B cell (primary cell): ENCODE measurements at regions of chr3 and their contacts with region 1.

Region 1: GRCh38 chr3:152268555-152269425 is at the start of gene MBNL1:
- DNase-seq: peak; percentile 93
- ATAC-seq: peak; percentile 70
- H3K4me3 ChIP-seq: peak within 1 kb of the TSS; percentile 91 to 100 (median 93)
- H3K4me3 Mint-ChIP-seq: peak within 1 kb of the TSS; percentile 87
- H3K27ac ChIP-seq: peak within 1 kb of the TSS; percentile 86 to 93
- H3K27ac Mint-ChIP-seq: peak within 1 kb of the TSS; percentile 96
- H3K4me1 ChIP-seq: peaks cover 29 to 49% of the 10 kb centered on the region in 2 donors
- H3K4me1 Mint-ChIP-seq: peaks cover 63% of the 10 kb centered on the region
- H3K27me3 ChIP-seq: no peaks in the 10 kb centered on the region
- H3K27me3 Mint-ChIP-seq: no peaks in the 10 kb centered on the region
- CTCF ChIP-seq: no peak
- total RNA-seq, gene MBNL1: 505 and 514 TPM in 2 replicates

Region 2: GRCh38 chr3:152199102-152199840 is 69.5 kb before region 1 on chr3:
- CTCF ChIA-PET with region 1: interaction called, 29 read pairs
- POLR2A ChIA-PET with region 1: interaction called, 52 read pairs
- intact Hi-C with region 1: loop called (anchors 1 kb)
- DNase-seq: peak; percentile 60
- ATAC-seq: peak; percentile 19
- H3K4me3 ChIP-seq: peak overlapping the region; percentile 16 to 69 (median 35)
- H3K4me3 Mint-ChIP-seq: peak overlapping the region; percentile 85
- H3K27ac ChIP-seq: peak overlapping the region; percentile 78 to 92
- H3K27ac Mint-ChIP-seq: peak overlapping the region; percentile 94
- H3K4me1 ChIP-seq: peaks cover 54 to 72% of the 10 kb centered on the region in 2 donors
- H3K4me1 Mint-ChIP-seq: peaks cover 71% of the 10 kb centered on the region
- H3K27me3 ChIP-seq: no peaks in the 10 kb centered on the region
- H3K27me3 Mint-ChIP-seq: no peaks in the 10 kb centered on the region
- CTCF ChIP-seq: no peak

Region 3: DNA sequence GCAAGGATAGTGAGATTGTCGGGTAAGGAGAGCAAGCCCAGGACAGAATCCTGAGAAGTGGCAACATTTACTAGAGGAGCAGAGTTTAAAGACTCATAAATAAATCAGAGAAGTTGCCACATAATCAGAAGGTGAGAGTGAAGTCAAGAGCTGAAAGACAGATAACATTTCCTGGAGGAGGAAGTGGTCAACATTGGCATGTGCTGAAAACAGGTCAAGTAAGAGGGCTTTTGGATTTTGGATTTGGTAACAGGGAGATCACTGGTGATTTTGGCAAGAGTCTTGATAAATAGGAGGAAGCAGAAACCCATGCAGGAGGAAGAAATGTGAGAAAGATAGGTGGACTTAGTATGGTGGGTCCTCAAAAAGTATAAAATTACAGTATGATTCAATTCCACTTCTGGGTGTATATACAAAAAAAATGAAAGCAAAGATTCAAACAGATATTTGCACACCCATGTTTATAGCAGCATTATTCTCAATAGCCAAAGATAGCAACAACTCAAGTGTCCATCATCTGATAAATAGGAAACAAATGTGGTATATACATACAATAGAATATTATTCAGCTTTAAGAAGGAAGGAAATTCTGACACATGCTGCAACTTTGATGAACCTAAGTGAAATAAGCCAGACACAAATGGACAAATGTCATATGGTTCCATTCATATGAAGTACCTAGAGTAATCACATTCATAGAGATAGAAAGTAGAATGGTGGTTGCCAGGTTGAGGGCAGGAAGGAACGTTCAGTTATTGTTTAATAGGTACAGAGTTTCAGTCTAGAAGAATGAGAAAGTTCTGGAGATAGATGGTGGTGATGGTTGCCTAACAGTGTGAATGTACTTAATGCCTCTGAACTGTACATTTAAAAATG is 27.4 kb before region 1 on chr3:
- CTCF ChIA-PET with region 1: interaction called, 17 read pairs
- POLR2A ChIA-PET with region 1: interaction called, 29 read pairs
- intact Hi-C with region 1: loop called (anchors 1 kb)
- DNase-seq: peak; percentile 38
- ATAC-seq: no peak
- H3K4me3 ChIP-seq: peak overlapping the region in 1 of 5 experiments; percentile 30
- H3K4me3 Mint-ChIP-seq: peak overlapping the region; percentile 68
- H3K27ac ChIP-seq: peak overlapping the region; percentile 57 to 87
- H3K27ac Mint-ChIP-seq: peak overlapping the region; percentile 84
- H3K4me1 ChIP-seq: peaks cover 38 to 53% of the 10 kb centered on the region in 2 donors
- H3K4me1 Mint-ChIP-seq: peaks cover 68% of the 10 kb centered on the region
- H3K27me3 ChIP-seq: no peaks in the 10 kb centered on the region
- H3K27me3 Mint-ChIP-seq: no peaks in the 10 kb centered on the region
- CTCF ChIP-seq: no peak

Region 4: DNA sequence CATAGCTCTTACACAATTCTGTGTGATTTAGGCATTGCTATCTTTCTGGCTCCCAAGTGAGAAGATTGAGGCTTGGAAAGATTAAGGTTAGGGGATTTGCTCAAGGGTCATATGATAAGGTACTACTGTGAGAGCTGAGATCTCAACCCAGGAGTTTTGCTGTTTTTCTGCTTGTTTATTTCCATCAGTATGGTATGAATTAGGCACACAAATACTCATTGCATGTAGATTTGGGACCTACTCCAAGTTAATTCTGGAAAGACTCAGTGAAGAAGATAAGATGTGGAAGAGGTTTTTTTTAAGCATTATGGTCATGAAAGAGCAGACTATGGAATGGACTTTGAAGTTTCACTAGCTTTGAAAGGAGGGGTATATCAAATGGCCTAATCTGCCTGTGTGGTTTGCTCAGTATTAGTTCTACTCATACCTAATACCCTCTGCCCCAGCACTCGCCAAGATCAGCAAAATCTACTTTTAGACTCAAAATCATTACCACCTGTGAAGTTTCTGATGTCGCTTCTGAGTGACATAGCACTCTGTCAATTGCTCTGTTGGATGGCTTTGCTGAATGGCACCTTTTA is 12.4 kb after region 1 on chr3:
- CTCF ChIA-PET with region 1: interaction called, 4 read pairs
- POLR2A ChIA-PET with region 1: interaction called, 8 read pairs
- intact Hi-C with region 1: loop called (anchors 1 kb)
- DNase-seq: no peak
- ATAC-seq: no peak
- H3K4me3 ChIP-seq: peak overlapping the region in 1 of 5 experiments; percentile 5
- H3K4me3 Mint-ChIP-seq: peak overlapping the region; percentile 68
- H3K27ac ChIP-seq: peak overlapping the region in 1 of 2 donors; percentile 73
- H3K27ac Mint-ChIP-seq: peak overlapping the region; percentile 62
- H3K4me1 ChIP-seq: peaks cover 63 to 90% of the 10 kb centered on the region in 2 donors
- H3K4me1 Mint-ChIP-seq: peaks cover 79% of the 10 kb centered on the region
- H3K27me3 ChIP-seq: no peaks in the 10 kb centered on the region
- H3K27me3 Mint-ChIP-seq: no peaks in the 10 kb centered on the region
- CTCF ChIP-seq: no peak

Region 5: DNA sequence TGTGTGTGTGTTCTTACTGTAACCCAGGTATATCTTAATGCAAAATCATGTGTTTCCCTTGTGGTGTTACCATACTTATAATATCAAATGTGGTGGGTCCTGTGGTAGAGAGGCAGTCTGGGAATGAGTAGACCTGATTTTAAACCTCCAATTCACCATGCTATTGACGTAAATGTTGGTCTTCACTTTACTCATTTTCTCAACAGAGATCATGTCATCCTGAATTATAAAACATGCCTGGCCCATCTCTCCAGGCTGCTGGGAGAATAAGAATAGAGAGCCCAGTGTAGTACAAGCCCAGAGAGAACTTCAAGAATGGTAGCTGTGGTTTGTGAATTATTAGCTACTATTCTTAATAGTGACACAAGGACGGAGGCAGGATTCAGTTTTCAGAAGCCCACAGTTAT is 88.1 kb after region 1 on chr3:
- CTCF ChIA-PET with region 1: no interaction called
- POLR2A ChIA-PET with region 1: interaction called, 17 read pairs
- intact Hi-C with region 1: no loop called
- DNase-seq: no peak
- ATAC-seq: no peak
- H3K4me3 ChIP-seq: no peak overlapping the region
- H3K4me3 Mint-ChIP-seq: no peak overlapping the region
- H3K27ac ChIP-seq: peak overlapping the region in 1 of 2 donors; percentile 54
- H3K27ac Mint-ChIP-seq: peak overlapping the region; percentile 51
- H3K4me1 ChIP-seq: peaks cover 16 to 41% of the 10 kb centered on the region in 2 donors
- H3K4me1 Mint-ChIP-seq: peaks cover 64% of the 10 kb centered on the region
- H3K27me3 ChIP-seq: no peaks in the 10 kb centered on the region
- H3K27me3 Mint-ChIP-seq: no peaks in the 10 kb centered on the region
- CTCF ChIP-seq: no peak